ENCODE measurements at regions of chr3 and their contacts with region 1.

Region 1: DNA sequence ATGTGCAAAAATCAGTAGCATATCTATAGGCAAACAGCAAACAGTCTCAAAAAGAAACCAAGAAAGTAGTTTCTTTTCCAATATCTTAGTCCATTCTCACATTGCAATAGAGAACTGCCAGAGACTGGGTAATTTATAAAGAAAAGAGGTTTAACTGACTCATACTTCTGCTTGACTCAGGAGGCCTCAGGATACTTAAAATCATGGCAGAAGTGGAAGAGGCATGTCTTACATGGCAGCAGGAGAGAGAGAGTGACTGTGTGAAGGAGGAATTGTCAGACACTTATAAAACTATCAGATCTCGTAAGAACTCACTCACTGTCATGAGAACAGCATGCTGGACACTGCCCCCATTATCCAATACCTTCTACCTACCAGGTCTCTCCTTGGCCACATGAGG is 327.9 kb upstream of the EPHA3 start:
- DNase-seq: no peak
- ATAC-seq: no peak
- H3K4me3 ChIP-seq: no peak overlapping the region
- H3K4me3 Mint-ChIP-seq: no peak overlapping the region
- H3K27ac ChIP-seq: no peak overlapping the region
- H3K27ac Mint-ChIP-seq: no peak overlapping the region
- H3K4me1 ChIP-seq: no peaks in the 10 kb centered on the region
- H3K4me1 Mint-ChIP-seq: no peaks in the 10 kb centered on the region
- H3K27me3 ChIP-seq: no peaks in the 10 kb centered on the region
- H3K27me3 Mint-ChIP-seq: no peaks in the 10 kb centered on the region

Region 2: GRCh38 chr3:88742106-88742505 is 37.4 kb before region 1 on chr3:
- CTCF ChIA-PET with region 1: no interaction called
- POLR2A ChIA-PET with region 1: no interaction called
- DNase-seq: no peak
- ATAC-seq: no peak
- H3K4me3 ChIP-seq: no peak overlapping the region
- H3K4me3 Mint-ChIP-seq: no peak overlapping the region
- H3K27ac ChIP-seq: no peak overlapping the region
- H3K27ac Mint-ChIP-seq: no peak overlapping the region
- H3K4me1 ChIP-seq: no peaks in the 10 kb centered on the region
- H3K4me1 Mint-ChIP-seq: no peaks in the 10 kb centered on the region
- H3K27me3 ChIP-seq: no peaks in the 10 kb centered on the region
- H3K27me3 Mint-ChIP-seq: no peaks in the 10 kb centered on the region

Region 3: GRCh38 chr3:88896026-88896425 is 116.5 kb after region 1 on chr3:
- CTCF ChIA-PET with region 1: interaction called in 1 of 2 experiments, 12 read pairs
- POLR2A ChIA-PET with region 1: no interaction called
- DNase-seq: no peak
- ATAC-seq: no peak
- H3K4me3 ChIP-seq: no peak overlapping the region
- H3K4me3 Mint-ChIP-seq: no peak overlapping the region
- H3K27ac ChIP-seq: no peak overlapping the region
- H3K27ac Mint-ChIP-seq: no peak overlapping the region
- H3K4me1 ChIP-seq: no peaks in the 10 kb centered on the region
- H3K4me1 Mint-ChIP-seq: no peaks in the 10 kb centered on the region
- H3K27me3 ChIP-seq: no peaks in the 10 kb centered on the region
- H3K27me3 Mint-ChIP-seq: no peaks in the 10 kb centered on the region

Measured in T-cell (primary cell).